ENCODE measurements at regions of chr1 and their contacts with region 1.

Region 1: GRCh38 chr1:112715264-112716053 is at the start of gene PPM1J:
- DNase-seq: peak; percentile 98
- ATAC-seq: peak; percentile 90
- H3K4me3 Mint-ChIP-seq: peak within 1 kb of the TSS; percentile 76
- H3K27ac Mint-ChIP-seq: no peak within 1 kb of the TSS
- H3K4me1 Mint-ChIP-seq: peaks cover 19% of the 10 kb centered on the region
- H3K27me3 Mint-ChIP-seq: peaks cover 30% of the 10 kb centered on the region
- CTCF ChIP-seq: no peak
- total RNA-seq, gene PPM1J: 1.7 to 2.8 TPM

Region 2: GRCh38 chr1:112501810-112502641 is 213.4 kb before region 1 on chr1:
- CTCF ChIA-PET with region 1: interaction called, 24 read pairs
- POLR2A ChIA-PET with region 1: no interaction called
- intact Hi-C with region 1: loop called (anchors 2 kb)
- DNase-seq: peak; percentile 64
- ATAC-seq: peak; percentile 66
- H3K4me3 Mint-ChIP-seq: peak overlapping the region; percentile 45
- H3K27ac Mint-ChIP-seq: no peak overlapping the region
- H3K4me1 Mint-ChIP-seq: peaks cover 8% of the 10 kb centered on the region
- H3K27me3 Mint-ChIP-seq: peaks cover 50% of the 10 kb centered on the region
- CTCF ChIP-seq: peak; percentile 64

Region 3: GRCh38 chr1:112674439-112674985 is 40.9 kb before region 1 on chr1 and contains the start of gene MOV10:
- CTCF ChIA-PET with region 1: interaction called, 11 read pairs
- POLR2A ChIA-PET with region 1: interaction called, 19 read pairs
- intact Hi-C with region 1: no loop called
- DNase-seq: peak; percentile 75
- ATAC-seq: peak; percentile 80
- H3K4me3 Mint-ChIP-seq: peak within 1 kb of the TSS; percentile 95
- H3K27ac Mint-ChIP-seq: peak within 1 kb of the TSS; percentile 97
- H3K4me1 Mint-ChIP-seq: peaks cover 56% of the 10 kb centered on the region
- H3K27me3 Mint-ChIP-seq: no peaks in the 10 kb centered on the region
- CTCF ChIP-seq: no peak
- total RNA-seq, gene MOV10: 77.2 to 78.5 TPM

Region 4: DNA sequence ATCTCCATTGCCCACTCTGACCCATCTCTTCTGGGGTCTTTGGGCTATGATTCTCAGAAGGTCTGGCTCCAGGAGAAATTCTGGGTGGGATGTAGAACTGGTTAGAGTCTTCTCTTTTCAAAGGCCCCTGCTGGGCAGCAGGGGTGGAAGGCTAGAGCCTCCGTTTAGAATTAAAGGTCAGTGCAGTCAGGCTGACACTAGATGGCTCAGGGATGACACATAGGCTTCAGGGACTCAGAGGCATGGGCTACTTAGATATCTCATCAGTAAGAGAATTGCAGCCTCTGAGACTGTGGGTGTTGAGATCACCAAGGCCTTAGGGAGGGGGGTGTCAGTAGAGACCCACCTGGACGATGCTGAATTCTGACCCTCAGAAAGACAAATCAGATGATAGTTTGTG is 12.3 kb after region 1 on chr1:
- CTCF ChIA-PET with region 1: interaction called, 19 read pairs
- POLR2A ChIA-PET with region 1: interaction called, 4 read pairs
- intact Hi-C with region 1: no loop called
- DNase-seq: no peak
- ATAC-seq: no peak
- H3K4me3 Mint-ChIP-seq: no peak overlapping the region
- H3K27ac Mint-ChIP-seq: no peak overlapping the region
- H3K4me1 Mint-ChIP-seq: peaks cover 8% of the 10 kb centered on the region
- H3K27me3 Mint-ChIP-seq: no peaks in the 10 kb centered on the region
- CTCF ChIP-seq: no peak

Region 5: DNA sequence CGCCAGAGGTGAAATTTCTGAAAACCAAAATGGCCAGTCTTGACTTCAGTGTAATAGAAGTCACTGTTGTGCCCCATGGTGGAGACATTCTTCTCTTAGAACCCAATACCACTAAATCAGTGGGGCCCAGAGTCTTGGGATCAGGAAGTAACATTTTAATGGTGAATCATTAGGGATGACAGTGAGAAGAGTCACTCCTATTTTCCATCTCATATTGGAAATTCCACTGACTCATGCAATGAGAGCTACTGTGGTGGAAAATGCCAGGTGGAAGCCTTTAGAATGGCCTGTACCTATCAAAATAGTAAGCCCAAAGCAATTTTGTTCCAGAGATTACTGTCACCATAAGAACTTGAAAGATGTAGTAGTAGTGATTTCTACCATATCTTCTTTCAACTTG is 20.3 kb after region 1 on chr1:
- CTCF ChIA-PET with region 1: interaction called, 12 read pairs
- POLR2A ChIA-PET with region 1: no interaction called
- intact Hi-C with region 1: no loop called
- DNase-seq: no peak
- ATAC-seq: peak; percentile 67
- H3K4me3 Mint-ChIP-seq: no peak overlapping the region
- H3K27ac Mint-ChIP-seq: no peak overlapping the region
- H3K4me1 Mint-ChIP-seq: peaks cover 6% of the 10 kb centered on the region
- H3K27me3 Mint-ChIP-seq: peaks cover 21% of the 10 kb centered on the region
- CTCF ChIP-seq: no peak

Region 6: GRCh38 chr1:112744009-112744578 is 28.6 kb after region 1 on chr1:
- CTCF ChIA-PET with region 1: interaction called, 28 read pairs
- POLR2A ChIA-PET with region 1: no interaction called
- intact Hi-C with region 1: no loop called
- DNase-seq: peak; percentile 7
- ATAC-seq: no peak
- H3K4me3 Mint-ChIP-seq: no peak overlapping the region
- H3K27ac Mint-ChIP-seq: no peak overlapping the region
- H3K4me1 Mint-ChIP-seq: no peaks in the 10 kb centered on the region
- H3K27me3 Mint-ChIP-seq: peaks cover 57% of the 10 kb centered on the region
- CTCF ChIP-seq: no peak

Region 7: GRCh38 chr1:112803906-112804762 is 88.7 kb after region 1 on chr1:
- CTCF ChIA-PET with region 1: interaction called, 302 read pairs
- POLR2A ChIA-PET with region 1: no interaction called
- intact Hi-C with region 1: loop called (anchors 1 kb)
- DNase-seq: peak; percentile 72
- ATAC-seq: peak; percentile 95
- H3K4me3 Mint-ChIP-seq: no peak overlapping the region
- H3K27ac Mint-ChIP-seq: no peak overlapping the region
- H3K4me1 Mint-ChIP-seq: no peaks in the 10 kb centered on the region
- H3K27me3 Mint-ChIP-seq: peaks cover 5% of the 10 kb centered on the region
- CTCF ChIP-seq: peak; percentile 65

Measured in activated CD8-positive, alpha-beta T cell treated with anti-CD3 and anti-CD28 coated beads for 36 hours (primary cell).